CD14-positive monocyte (primary cell): ENCODE measurements at regions of chr7 and their contacts with region 1.

Region 1: DNA sequence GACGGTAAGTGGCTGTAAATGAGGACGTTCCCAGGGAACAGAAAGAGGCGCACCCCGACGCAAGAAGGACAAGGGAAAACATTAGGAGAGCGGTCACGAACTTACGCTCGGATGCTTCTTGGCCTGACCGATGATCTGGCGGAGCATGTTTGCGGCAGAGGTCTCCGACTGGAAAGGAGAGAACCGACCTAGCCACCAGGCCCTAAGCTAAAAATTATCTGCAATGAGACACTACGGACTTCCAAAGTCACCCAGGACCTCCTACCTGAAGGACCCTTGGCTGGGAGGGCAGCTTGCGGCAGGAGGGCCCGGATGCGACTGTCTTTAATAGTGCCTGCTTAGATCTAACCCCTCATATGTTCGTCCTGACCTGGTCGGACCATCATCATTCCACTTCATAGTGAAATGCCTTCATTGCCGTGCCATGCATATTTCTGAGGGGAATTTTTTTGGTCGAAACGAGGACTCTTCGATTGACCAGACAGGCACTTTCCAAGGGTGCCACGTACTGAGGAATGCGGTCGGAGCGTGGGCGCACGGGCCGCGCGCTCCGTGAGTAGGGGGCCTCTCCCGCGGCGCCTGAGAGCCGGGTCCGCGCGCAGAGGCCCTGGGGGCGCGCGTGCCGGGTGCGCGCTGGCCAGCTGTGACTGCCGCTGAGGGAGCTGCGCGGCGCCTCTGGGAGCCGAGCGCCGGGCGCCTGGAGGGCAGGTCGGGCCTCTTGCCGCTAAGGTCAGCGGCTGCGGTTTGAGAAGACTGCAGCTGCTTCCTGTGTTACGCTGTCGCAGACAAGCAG is 33.6 kb upstream of the PHF14 start:
- DNase-seq: peak; percentile 84 to 90 (median 89)
- H3K4me3 ChIP-seq: peak overlapping the region; percentile 61 to 93 (median 85)
- H3K4me3 Mint-ChIP-seq: no peak overlapping the region
- H3K27ac ChIP-seq: peak overlapping the region; percentile 74 to 94
- H3K27ac Mint-ChIP-seq: no peak overlapping the region
- H3K4me1 ChIP-seq: peaks cover 15 to 26% of the 10 kb centered on the region in 2 donors
- H3K4me1 Mint-ChIP-seq: peaks cover 15% of the 10 kb centered on the region
- H3K27me3 ChIP-seq: no peaks in the 10 kb centered on the region
- H3K27me3 Mint-ChIP-seq: peaks cover 0 to 2% (median 2%) of the 10 kb centered on the region in 3 donors
- CTCF ChIP-seq: no peak

Region 2: GRCh38 chr7:10973061-10973944 is 33.2 kb after region 1 on chr7 and contains the start of gene PHF14:
- intact Hi-C with region 1: loop called in 1 of 2 experiments (anchors 2 kb)
- DNase-seq: peak; percentile 95 to 96 (median 96)
- H3K4me3 ChIP-seq: peak within 1 kb of the TSS; percentile 65 to 81 (median 78)
- H3K4me3 Mint-ChIP-seq: peak within 1 kb of the TSS; percentile 94
- H3K27ac ChIP-seq: peak within 1 kb of the TSS; percentile 73 to 83
- H3K27ac Mint-ChIP-seq: peak within 1 kb of the TSS; percentile 85 to 93 (median 90)
- H3K4me1 ChIP-seq: peaks cover 14 to 18% of the 10 kb centered on the region in 2 donors
- H3K4me1 Mint-ChIP-seq: peaks cover 25% of the 10 kb centered on the region
- H3K27me3 ChIP-seq: no peaks in the 10 kb centered on the region
- H3K27me3 Mint-ChIP-seq: peaks cover 0 to 3% (median 3%) of the 10 kb centered on the region in 3 donors
- CTCF ChIP-seq: no peak
- polyA plus RNA-seq, gene PHF14: 4.8 to 7.4 (median 5.4) TPM